Activated CD4-positive, alpha-beta T cell treated with anti-CD3 and anti-CD28 coated beads for 36 hours (primary cell): ENCODE measurements at regions of chr3 and their contacts with region 1.

Region 1: GRCh38 chr3:23805633-23806533 is at the start of gene UBE2E1:
- DNase-seq: peak; percentile 77
- ATAC-seq: peak; percentile 69
- H3K4me3 Mint-ChIP-seq: peak within 1 kb of the TSS; percentile 91
- H3K27ac Mint-ChIP-seq: peak within 1 kb of the TSS; percentile 89
- H3K4me1 Mint-ChIP-seq: peaks cover 36% of the 10 kb centered on the region
- H3K27me3 Mint-ChIP-seq: peaks cover 8% of the 10 kb centered on the region
- total RNA-seq, gene UBE2E1: 86.3 to 93.8 TPM

Region 2: GRCh38 chr3:23202921-23203707 is 602.8 kb before region 1 on chr3 and contains the start of gene UBE2E2:
- CTCF ChIA-PET with region 1: no interaction called
- POLR2A ChIA-PET with region 1: no interaction called
- intact Hi-C with region 1: loop called (anchors 5 to 10 kb)
- DNase-seq: peak; percentile 78
- ATAC-seq: peak; percentile 62
- H3K4me3 Mint-ChIP-seq: peak within 1 kb of the TSS; percentile 83
- H3K27ac Mint-ChIP-seq: peak within 1 kb of the TSS; percentile 76
- H3K4me1 Mint-ChIP-seq: peaks cover 23% of the 10 kb centered on the region
- H3K27me3 Mint-ChIP-seq: peaks cover 11% of the 10 kb centered on the region
- total RNA-seq, gene UBE2E2: 13.5 to 18.2 TPM

Region 3: DNA sequence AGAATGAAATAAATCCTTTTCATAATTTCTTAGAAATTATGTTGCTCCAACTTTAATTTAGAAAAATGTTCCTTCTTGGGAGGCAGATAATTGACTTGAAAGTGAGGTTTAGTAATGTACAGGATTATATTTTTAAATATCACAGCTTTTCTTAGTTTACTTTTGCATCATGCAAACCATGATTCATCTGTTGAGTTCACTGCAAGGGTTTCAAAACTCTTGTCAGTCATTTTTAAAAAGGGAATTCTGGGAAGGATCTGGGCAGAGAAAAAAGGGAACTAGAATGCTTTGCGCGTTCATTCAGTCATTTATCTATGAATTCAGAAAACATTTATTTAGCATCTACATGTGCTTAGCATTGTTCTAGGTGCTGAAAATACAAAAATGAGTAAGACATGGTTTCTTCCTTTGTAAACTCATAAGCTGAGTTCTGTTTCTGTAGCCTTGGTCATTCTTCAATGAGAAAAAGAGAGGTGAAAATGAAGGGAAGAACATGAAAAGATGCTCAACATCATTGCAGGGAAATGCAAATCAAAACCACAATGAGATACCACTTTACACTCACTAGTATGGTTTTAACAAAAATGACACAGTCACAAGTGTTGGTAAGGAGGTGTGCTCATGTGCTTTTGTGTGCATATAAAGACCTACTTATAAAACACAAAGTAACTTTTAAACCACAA is 348.3 kb after region 1 on chr3:
- CTCF ChIA-PET with region 1: no interaction called
- POLR2A ChIA-PET with region 1: no interaction called
- intact Hi-C with region 1: loop called in 1 of 2 experiments (anchors 10 kb)
- DNase-seq: no peak
- ATAC-seq: peak; percentile 80
- H3K4me3 Mint-ChIP-seq: no peak overlapping the region
- H3K27ac Mint-ChIP-seq: peak overlapping the region; percentile 7
- H3K4me1 Mint-ChIP-seq: peaks cover 28% of the 10 kb centered on the region
- H3K27me3 Mint-ChIP-seq: peaks cover 7% of the 10 kb centered on the region

Region 4: GRCh38 chr3:25664810-25665314 is 1859.0 kb after region 1 on chr3 and contains the start of gene TOP2B:
- CTCF ChIA-PET with region 1: no interaction called
- POLR2A ChIA-PET with region 1: no interaction called
- intact Hi-C with region 1: loop called in 1 of 2 experiments (anchors 5 kb)
- DNase-seq: peak; percentile 96
- ATAC-seq: peak; percentile 93
- H3K4me3 Mint-ChIP-seq: peak within 1 kb of the TSS; percentile 83
- H3K27ac Mint-ChIP-seq: peak within 1 kb of the TSS; percentile 100
- H3K4me1 Mint-ChIP-seq: peaks cover 44% of the 10 kb centered on the region
- H3K27me3 Mint-ChIP-seq: no peaks in the 10 kb centered on the region
- total RNA-seq, gene TOP2B: 132 to 156 TPM

Region 5: DNA sequence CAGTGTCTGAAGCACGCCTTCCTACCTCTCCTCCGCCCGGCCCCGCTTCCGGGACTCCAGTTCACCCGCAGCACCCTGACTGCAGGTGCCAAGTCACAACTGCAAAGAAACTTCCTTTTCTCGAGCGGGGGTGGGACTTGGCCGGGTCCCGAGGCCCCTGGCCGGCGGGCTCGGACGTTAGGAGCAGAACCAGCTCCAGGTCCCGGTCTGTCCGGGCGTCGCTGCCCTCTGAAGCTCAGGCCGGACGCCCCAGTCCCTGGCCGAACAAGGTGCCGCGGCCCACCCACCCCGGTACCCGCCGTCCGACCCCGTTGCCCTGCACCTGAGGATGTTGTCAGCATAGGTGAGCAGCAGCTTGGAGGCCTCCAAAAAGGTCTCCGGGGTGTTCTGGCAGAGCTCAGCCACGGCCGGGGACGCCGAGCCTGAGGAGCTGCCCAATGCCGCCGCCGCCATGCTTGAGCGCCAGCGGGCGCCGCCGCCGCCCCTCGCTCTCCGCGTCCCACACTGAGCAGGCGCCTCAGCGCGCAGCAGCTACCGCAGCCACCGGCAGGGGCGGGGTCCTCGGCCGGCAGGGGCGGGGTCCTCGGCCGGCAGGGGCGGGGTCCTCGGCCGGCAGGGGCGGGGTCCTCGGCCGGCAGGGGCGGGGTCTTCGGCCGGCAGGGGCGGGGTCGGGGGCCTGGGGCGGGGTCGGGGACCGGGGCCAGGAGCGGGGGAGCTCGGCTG is 1977.2 kb after region 1 on chr3 and contains the start of gene NGLY1:
- CTCF ChIA-PET with region 1: no interaction called
- POLR2A ChIA-PET with region 1: no interaction called
- intact Hi-C with region 1: loop called in 1 of 2 experiments (anchors 5 kb)
- DNase-seq: peak; percentile 92
- ATAC-seq: peak; percentile 93
- H3K4me3 Mint-ChIP-seq: peak within 1 kb of the TSS; percentile 92
- H3K27ac Mint-ChIP-seq: peak within 1 kb of the TSS; percentile 90
- H3K4me1 Mint-ChIP-seq: peaks cover 54% of the 10 kb centered on the region
- H3K27me3 Mint-ChIP-seq: no peaks in the 10 kb centered on the region
- total RNA-seq, gene NGLY1: 86.1 to 135 TPM